Pancreas (tissue), 10 donors: ENCODE measurements at regions of chr11 and their contacts with region 1.

Region 1: DNA sequence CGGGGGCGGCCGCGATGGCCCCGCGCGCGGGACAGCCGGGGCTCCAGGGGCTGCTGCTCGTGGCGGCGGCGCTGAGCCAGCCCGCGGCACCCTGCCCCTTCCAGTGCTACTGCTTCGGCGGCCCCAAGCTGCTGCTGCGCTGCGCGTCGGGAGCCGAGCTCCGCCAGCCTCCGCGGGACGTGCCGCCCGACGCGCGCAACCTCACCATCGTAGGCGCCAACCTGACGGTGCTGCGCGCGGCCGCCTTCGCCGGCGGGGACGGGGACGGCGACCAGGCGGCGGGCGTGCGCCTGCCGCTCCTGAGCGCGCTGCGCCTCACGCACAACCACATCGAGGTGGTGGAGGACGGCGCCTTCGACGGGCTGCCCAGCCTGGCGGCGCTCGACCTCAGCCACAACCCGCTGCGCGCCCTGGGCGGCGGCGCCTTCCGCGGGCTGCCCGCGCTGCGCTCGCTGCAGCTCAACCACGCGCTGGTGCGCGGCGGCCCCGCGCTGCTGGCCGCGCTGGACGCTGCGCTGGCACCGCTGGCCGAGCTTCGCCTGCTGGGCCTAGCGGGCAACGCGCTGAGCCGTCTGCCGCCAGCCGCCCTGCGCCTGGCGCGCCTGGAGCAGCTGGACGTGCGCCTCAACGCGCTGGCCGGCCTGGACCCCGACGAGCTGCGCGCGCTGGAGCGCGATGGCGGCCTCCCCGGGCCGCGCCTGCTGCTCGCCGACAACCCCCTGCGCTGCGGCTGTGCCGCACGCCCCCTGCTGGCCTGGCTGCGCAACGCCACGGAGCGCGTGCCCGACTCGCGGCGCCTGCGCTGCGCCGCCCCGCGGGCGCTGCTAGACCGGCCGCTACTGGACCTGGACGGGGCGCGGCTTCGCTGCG is 697 bp downstream of the TPBGL start:
- DNase-seq: peak; percentile 77 to 99 (median 91)
- ATAC-seq: peak; percentile 91 to 98 (median 96)
- H3K4me3 ChIP-seq: peak overlapping the region in 3 of 4 donors; percentile 10 to 46 (median 32)
- H3K27ac ChIP-seq: no peak overlapping the region
- H3K4me1 ChIP-seq: peaks cover 0 to 1% (median 0%) of the 10 kb centered on the region in 3 donors
- H3K27me3 ChIP-seq: peaks cover 0 to 4% (median 0%) of the 10 kb centered on the region in 4 donors
- CTCF ChIP-seq: peak; percentile 79 to 86 (median 82)

Region 2: DNA sequence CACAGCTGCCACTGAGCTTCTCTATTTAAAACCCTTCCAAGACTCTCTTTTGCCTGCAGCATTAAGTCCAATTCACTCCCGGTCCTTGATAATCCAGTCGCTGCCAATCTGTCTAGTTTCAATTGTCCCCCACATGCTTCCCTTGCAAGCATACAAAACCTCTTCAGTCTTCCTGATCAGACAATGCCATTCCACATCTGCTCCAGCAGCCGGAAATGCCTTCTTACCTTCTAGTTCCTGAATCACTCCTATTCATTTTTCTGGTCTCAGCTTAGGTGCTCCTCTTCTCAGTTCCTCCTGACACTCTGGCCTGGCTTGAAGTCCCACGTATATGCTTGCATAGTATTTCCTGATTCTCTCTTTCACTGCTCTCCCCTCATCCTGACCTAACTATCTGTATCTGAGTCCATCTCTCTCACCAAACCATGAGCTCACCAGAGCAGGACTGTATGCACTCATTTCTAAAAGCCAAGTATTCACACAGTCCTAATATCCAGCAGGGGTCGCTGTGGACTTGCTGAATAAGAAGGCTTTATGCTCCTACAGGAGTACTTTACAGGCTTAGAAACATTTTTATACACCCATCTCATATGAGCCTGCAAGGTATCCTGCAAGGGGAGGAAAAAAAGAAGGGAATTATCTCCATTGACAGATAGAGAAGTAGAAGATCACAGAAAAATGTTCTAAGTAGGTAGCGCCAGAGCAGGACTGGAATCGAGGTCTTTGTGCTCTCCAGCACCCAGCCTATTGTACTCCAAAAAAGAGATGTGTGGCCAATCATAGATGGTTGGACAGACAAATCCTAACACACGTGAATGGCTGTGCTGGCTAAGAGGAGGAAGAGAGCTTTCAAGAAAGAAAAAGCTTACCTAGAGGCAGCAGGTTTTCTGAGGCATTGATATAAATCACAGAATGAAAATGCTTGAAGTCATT is 311.6 kb before region 1 on chr11:
- intact Hi-C with region 1: loop called in 1 of 3 experiments (anchors 10 kb)
- DNase-seq: peak in 4 of 6 donors; percentile 33 to 69 (median 50)
- ATAC-seq: peak; percentile 87 to 95 (median 92)
- H3K4me3 ChIP-seq: no peak overlapping the region
- H3K27ac ChIP-seq: no peak overlapping the region
- H3K4me1 ChIP-seq: no peaks in the 10 kb centered on the region
- H3K27me3 ChIP-seq: no peaks in the 10 kb centered on the region
- CTCF ChIP-seq: peak; percentile 71 to 83 (median 78)

Region 3: DNA sequence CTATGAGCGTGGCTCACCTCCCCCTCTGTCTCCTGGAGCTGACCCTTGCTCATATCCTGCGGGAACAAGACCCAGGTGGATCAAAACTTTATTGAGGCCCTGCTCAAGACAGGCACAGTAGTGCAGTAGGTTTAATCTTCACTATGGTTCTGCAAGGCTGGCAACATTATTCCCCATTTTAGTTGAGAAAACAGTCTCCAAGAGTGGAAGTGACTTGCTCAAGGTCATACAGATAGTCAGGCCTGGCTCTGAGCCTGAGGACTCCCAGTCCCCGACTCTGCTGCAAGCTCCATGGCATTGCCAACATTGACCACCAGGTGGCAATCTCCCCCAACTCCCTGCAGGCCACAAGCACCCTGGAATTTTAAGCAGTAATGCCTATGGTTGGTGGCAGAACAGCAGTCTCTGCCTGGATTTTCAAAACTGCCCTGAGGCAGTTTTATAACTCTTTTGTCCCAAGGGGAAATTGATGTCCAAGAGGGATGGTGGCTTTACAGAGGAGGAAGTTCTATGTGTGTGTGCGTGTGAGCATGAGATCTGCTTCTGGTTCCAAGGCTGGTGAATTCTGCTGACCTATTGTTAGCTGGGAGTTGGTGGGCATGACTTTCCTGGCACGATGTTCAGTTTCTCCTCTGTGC is 218.4 kb before region 1 on chr11:
- intact Hi-C with region 1: loop called in 1 of 3 experiments (anchors 10 kb)
- DNase-seq: peak; percentile 79 to 92 (median 90)
- ATAC-seq: peak; percentile 93 to 100 (median 98)
- H3K4me3 ChIP-seq: no peak overlapping the region
- H3K27ac ChIP-seq: peak overlapping the region in 1 of 4 donors; percentile 7
- H3K4me1 ChIP-seq: peaks cover 0 to 5% (median 0%) of the 10 kb centered on the region in 3 donors
- H3K27me3 ChIP-seq: no peaks in the 10 kb centered on the region
- CTCF ChIP-seq: peak; percentile 92 to 95 (median 94)

Region 4: GRCh38 chr11:75428281-75428724 is 187.0 kb after region 1 on chr11:
- intact Hi-C with region 1: no loop called
- DNase-seq: peak; percentile 79 to 96 (median 90)
- ATAC-seq: peak; percentile 71 to 91 (median 89)
- H3K4me3 ChIP-seq: peak overlapping the region; percentile 12 to 39 (median 18)
- H3K27ac ChIP-seq: peak overlapping the region in 3 of 4 donors; percentile 48 to 53 (median 52)
- H3K4me1 ChIP-seq: peaks cover 3 to 7% (median 4%) of the 10 kb centered on the region in 3 donors
- H3K27me3 ChIP-seq: no peaks in the 10 kb centered on the region
- CTCF ChIP-seq: no peak